ENCODE measurements at regions of chr4 and their contacts with region 1.

Region 1: GRCh38 chr4:39134683-39135319 is 47.5 kb upstream of the WDR19 start:
- DNase-seq: peak in 1 of 2 donors; percentile 8
- H3K4me3 ChIP-seq: no peak overlapping the region
- H3K27ac ChIP-seq: no peak overlapping the region
- H3K4me1 ChIP-seq: peaks cover 0 to 11% (median 8%) of the 10 kb centered on the region in 4 donors
- H3K27me3 ChIP-seq: no peaks in the 10 kb centered on the region
- CTCF ChIP-seq: no peak
- EP300 ChIP-seq: no peak
- POLR2A ChIP-seq: no peak

Region 2: DNA sequence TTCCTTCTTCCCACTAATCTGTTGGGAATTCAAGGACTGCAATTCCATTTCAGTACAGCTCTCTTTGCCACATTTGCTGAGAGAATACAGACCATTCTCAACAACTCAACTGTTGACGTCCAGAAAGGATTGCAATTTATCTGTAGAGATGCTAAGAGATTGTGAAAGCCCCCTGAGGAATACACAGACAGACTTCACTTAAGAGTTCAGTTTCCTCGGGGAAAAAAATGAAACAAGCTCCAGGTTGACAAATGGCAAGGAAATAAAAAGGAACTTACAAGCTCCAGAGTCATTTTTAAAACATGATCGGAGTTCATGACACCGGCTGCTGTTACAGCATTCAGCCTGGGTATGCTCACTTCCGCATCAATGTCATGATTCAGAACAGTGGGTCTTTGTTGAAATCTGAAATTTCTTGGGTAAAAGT is 365.8 kb before region 1 on chr4:
- intact Hi-C with region 1: loop called (anchors 10 kb)
- DNase-seq: peak in 1 of 2 donors; percentile 50
- H3K4me3 ChIP-seq: no peak overlapping the region
- H3K27ac ChIP-seq: peak overlapping the region in 1 of 5 donors; percentile 22
- H3K4me1 ChIP-seq: no peaks in the 10 kb centered on the region
- H3K27me3 ChIP-seq: no peaks in the 10 kb centered on the region
- CTCF ChIP-seq: no peak
- EP300 ChIP-seq: no peak
- POLR2A ChIP-seq: no peak

Region 3: GRCh38 chr4:38905652-38906385 is 229.0 kb before region 1 on chr4:
- intact Hi-C with region 1: loop called (anchors 5 kb)
- DNase-seq: peak in 1 of 2 donors; percentile 20
- H3K4me3 ChIP-seq: no peak overlapping the region
- H3K27ac ChIP-seq: peak overlapping the region in 1 of 5 donors; percentile 50
- H3K4me1 ChIP-seq: peaks cover 0 to 25% (median 15%) of the 10 kb centered on the region in 4 donors
- H3K27me3 ChIP-seq: no peaks in the 10 kb centered on the region
- CTCF ChIP-seq: no peak
- EP300 ChIP-seq: no peak
- POLR2A ChIP-seq: no peak

Measured in stomach (tissue), 19 donors.